ENCODE measurements at regions of chrX and their contacts with region 1.

Region 1: GRCh38 chrX:24054182-24055042 is at the start of gene EIF2S3:
- DNase-seq: peak; percentile 95
- H3K4me3 ChIP-seq: peak within 1 kb of the TSS in 2 of 3 experiments; percentile 49 to 85
- H3K27ac ChIP-seq: peak within 1 kb of the TSS; percentile 79
- H3K4me1 ChIP-seq: peaks cover 5% of the 10 kb centered on the region
- H3K27me3 ChIP-seq: no peaks in the 10 kb centered on the region
- CTCF ChIP-seq: peak; percentile 53 to 68
- POLR2A ChIP-seq: peak; percentile 66
- total RNA-seq, gene EIF2S3: 152 and 161 TPM in 2 replicates

Region 2: GRCh38 chrX:23694606-23695005 is 359.8 kb before region 1 on chrX:
- CTCF ChIA-PET with region 1: interaction called, 6 read pairs
- POLR2A ChIA-PET with region 1: no interaction called
- dilution Hi-C with region 1: no loop called
- intact Hi-C with region 1: loop called (anchors 10 kb)
- DNase-seq: peak; percentile 42
- H3K4me3 ChIP-seq: no peak overlapping the region
- H3K27ac ChIP-seq: no peak overlapping the region
- H3K4me1 ChIP-seq: no peaks in the 10 kb centered on the region
- H3K27me3 ChIP-seq: no peaks in the 10 kb centered on the region
- CTCF ChIP-seq: peak; percentile 5 to 33
- POLR2A ChIP-seq: no peak

Region 3: DNA sequence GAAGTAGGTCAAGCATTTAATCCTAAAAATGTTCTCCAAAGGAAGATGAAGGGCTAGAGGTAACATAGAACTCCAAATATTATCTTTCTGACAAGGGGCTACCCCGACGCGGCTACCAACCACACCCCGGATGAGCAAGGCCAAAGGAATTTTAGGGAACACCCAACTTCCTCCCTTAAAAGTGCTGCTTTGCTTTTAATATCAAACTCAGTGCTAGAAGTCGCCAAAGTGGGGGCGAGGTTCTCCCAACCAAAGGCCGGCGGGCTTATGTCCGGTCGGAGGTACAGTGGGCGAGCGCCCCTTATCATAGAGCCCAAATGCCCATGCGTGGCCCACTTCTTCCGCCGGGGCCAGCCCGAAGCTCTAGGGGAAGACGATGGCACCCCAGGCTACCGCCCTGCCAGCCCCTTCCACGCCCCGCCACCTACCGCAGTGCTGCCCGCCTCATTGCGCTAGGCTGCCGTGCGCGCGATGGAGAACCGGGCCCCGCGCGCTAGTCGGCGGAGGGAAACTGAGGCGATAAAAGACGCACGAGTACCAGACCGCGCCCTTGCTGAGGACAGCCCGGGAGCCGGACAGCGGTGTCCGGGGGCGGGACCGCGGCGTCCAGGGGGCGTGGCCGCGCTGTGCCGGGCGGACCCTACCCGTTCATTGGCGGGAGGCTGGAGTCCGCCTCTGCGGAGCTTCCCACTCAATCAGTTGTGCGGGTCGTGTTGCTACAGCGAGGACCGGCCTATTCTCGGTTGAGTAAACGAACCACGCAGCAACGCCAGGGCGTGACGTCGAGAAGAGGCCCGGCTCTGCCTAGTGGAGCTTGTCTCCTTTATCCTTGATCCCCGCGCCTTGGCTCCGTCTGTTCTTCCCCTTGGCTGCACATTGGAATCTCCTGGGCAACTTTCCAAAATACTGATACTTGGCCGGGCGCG is 311.5 kb before region 1 on chrX and contains the start of gene ACOT9:
- CTCF ChIA-PET with region 1: interaction called, 6 read pairs
- POLR2A ChIA-PET with region 1: no interaction called
- dilution Hi-C with region 1: no loop called
- intact Hi-C with region 1: loop called (anchors 2 kb)
- DNase-seq: peak; percentile 94
- H3K4me3 ChIP-seq: peak within 1 kb of the TSS; percentile 46 to 94 (median 90)
- H3K27ac ChIP-seq: peak within 1 kb of the TSS; percentile 94
- H3K4me1 ChIP-seq: peaks cover 13% of the 10 kb centered on the region
- H3K27me3 ChIP-seq: no peaks in the 10 kb centered on the region
- CTCF ChIP-seq: no peak
- POLR2A ChIP-seq: peak; percentile 79
- total RNA-seq, gene ACOT9: 83.1 and 88.5 TPM in 2 replicates

Region 4: DNA sequence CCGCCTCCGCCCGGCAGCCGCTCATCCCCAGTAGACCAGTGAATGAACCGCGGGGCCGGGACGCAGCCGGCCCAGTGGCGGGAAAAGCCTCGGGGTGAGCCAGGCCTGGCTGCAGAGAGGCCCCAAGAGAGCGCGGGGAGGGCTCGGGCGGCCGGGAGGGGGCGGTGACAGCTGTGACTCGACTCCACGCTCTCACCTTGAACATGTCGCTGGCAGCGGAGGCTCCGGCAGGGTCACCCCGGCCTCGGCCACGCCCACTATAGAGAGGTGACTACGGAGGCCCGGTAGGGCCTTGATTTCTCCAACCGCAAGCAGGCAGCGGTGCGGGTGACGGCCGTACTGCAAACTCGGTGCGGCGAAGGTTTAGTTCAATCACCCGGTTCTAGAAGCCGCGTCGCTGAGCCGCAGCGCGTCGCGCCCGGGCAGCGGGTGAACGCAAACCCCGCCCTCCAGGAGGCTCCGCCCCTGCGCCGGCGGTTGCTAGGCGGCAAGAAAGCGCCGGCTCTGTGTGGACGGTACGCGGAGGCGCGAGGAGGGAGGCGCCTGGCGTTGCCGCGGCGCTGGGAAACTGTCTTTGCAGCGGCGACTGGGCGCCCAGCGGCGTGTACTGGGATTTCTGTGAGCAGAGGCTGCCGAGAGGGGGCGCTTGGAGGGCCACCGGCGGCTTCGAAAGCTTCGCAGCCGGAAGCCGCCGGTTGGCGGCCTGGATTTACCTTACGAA is 146.8 kb before region 1 on chrX and contains the starts of genes APOO and CXorf58:
- CTCF ChIA-PET with region 1: interaction called, 41 read pairs
- POLR2A ChIA-PET with region 1: no interaction called
- dilution Hi-C with region 1: no loop called
- intact Hi-C with region 1: loop called (anchors 1 kb)
- DNase-seq: peak; percentile 91
- H3K4me3 ChIP-seq: peak within 1 kb of the TSS; percentile 51 to 82 (median 72)
- H3K27ac ChIP-seq: peak within 1 kb of the TSS; percentile 68
- H3K4me1 ChIP-seq: peaks cover 5% of the 10 kb centered on the region
- H3K27me3 ChIP-seq: no peaks in the 10 kb centered on the region
- CTCF ChIP-seq: peak; percentile 71 to 83
- POLR2A ChIP-seq: peak; percentile 39
- total RNA-seq, gene APOO: 20.9 and 24.3 TPM in 2 replicates
- total RNA-seq, gene CXorf58: not detected in 2 replicates

Region 5: DNA sequence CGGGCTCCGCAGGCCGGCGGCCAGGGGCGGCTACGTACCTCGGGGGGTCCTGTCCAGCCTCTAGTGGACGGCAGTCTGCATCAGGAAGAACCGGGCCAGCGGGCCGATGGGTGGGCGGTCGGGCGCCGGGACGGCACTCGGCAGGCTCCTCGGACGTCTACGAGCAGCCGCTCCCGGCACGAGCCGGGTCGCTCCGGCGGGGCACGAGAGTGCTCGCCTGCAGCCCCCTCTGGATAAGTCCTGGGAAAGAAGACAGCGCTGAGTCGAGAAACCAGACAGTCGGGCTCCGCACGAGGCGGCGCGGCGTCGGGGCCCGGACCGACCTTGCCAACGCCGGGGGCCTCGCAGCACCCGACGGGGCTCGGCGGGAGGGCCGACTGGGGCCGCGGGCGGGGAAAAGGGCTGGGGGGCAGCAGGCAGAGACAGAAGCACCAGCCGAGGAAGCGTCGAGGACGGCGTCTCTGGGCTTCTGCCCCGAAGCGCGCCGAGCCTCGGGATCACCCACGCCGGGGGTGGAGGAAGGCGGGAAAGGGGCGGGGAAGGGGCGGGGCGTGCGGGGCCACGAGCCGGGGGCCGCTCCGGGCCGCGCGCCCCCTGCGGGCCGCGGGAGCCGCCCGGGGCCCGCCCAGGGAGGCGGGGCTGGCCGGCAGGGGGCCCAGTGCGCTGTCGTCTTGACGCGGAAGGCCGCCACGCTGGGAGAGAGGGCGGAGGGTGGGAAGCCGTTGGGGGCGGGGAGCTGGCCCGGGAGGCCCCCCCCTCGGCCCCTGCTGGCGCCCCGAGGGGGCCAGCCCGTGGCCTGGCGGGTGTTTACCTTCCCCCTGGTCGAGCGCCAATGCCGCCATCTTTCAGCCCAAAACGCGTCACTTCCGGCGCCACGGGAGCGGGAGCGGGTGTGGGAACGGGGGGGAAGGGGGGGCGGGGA is 29.3 kb before region 1 on chrX:
- CTCF ChIA-PET with region 1: interaction called, 32 read pairs
- POLR2A ChIA-PET with region 1: interaction called, 14 read pairs
- dilution Hi-C with region 1: no loop called
- intact Hi-C with region 1: loop called (anchors 1 kb)
- DNase-seq: peak; percentile 86
- H3K4me3 ChIP-seq: peak overlapping the region; percentile 81 to 93 (median 86)
- H3K27ac ChIP-seq: peak overlapping the region; percentile 90
- H3K4me1 ChIP-seq: peaks cover 8% of the 10 kb centered on the region
- H3K27me3 ChIP-seq: no peaks in the 10 kb centered on the region
- CTCF ChIP-seq: peak in 1 of 2 donors; percentile 20
- POLR2A ChIP-seq: peak; percentile 81

Region 6: GRCh38 chrX:24732766-24733500 is 678.5 kb after region 1 on chrX:
- CTCF ChIA-PET with region 1: no interaction called
- POLR2A ChIA-PET with region 1: no interaction called
- dilution Hi-C with region 1: no loop called
- intact Hi-C with region 1: no loop called
- DNase-seq: no peak
- H3K4me3 ChIP-seq: no peak overlapping the region
- H3K27ac ChIP-seq: no peak overlapping the region
- H3K4me1 ChIP-seq: no peaks in the 10 kb centered on the region
- H3K27me3 ChIP-seq: no peaks in the 10 kb centered on the region
- CTCF ChIP-seq: no peak
- POLR2A ChIP-seq: no peak